ENCODE measurements at regions of chr6 and their contacts with region 1.

Region 1: DNA sequence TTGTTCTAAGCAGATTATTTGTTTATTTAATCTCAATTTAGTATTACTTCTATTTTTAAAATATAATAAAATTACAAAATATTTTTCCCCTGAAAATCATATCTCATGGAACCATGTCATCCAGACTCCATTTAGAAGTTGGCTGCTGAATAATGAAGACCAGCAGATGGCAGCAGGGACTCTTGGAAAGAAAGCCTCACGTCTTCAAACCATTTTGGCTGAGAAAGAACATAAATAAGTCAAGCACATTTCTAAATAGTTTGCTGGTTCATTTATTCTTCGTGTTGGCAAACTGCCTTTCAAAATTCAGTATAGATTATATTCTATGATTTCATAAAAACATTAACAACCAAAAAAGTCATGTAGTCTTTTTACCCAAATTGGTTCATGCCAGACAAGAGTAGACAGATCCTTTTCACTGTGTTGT is 71.7 kb downstream of the RCAN2 start:
- DNase-seq: no peak
- ATAC-seq: no peak

Region 2: GRCh38 chr6:45930420-45931040 is 489.1 kb before region 1 on chr6:
- intact Hi-C with region 1: loop called (anchors 10 kb)
- DNase-seq: peak; percentile 80
- ATAC-seq: peak; percentile 71

Region 3: GRCh38 chr6:46491628-46492547 is 72.3 kb after region 1 on chr6:
- intact Hi-C with region 1: loop called (anchors 1 kb)
- DNase-seq: peak; percentile 76
- ATAC-seq: peak; percentile 91

Region 4: GRCh38 chr6:46612645-46613044 is 193.1 kb after region 1 on chr6:
- intact Hi-C with region 1: loop called (anchors 5 kb)
- DNase-seq: no peak
- ATAC-seq: peak; percentile 57

Region 5: DNA sequence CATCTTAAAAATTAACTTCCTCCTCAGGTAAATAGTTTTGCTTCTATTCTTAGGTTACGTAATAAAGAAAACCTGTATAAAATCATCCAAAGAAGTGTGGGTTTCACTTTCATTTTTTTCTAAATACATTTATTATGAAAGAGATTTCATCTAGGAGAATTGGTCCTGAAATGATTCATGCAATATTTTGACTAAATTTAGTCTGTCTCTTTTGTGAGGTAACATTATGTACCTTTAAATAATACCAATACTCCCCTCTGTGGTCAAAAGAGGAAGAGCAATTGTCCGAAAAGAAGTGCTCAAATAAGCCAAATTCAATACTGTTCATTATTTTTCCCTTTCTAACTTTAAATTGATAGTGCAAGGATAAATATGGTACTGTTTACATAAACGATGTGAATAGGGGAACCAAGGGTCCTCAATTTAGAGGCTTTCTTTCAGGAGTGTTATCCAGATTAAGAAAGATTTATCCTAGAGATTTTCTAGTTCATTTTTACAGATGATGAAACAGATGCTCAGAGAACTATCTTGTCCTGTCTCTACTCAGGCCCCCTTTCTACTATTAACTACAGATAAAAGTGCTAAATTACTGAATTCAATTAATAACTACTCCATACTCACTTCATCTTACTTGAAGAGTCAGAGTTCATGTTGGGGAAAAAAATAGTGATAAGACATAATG is 206.8 kb after region 1 on chr6:
- intact Hi-C with region 1: loop called (anchors 1 kb)
- DNase-seq: no peak
- ATAC-seq: no peak

Region 6: GRCh38 chr6:46772762-46773161 is 353.2 kb after region 1 on chr6:
- intact Hi-C with region 1: loop called (anchors 10 kb)
- DNase-seq: no peak
- ATAC-seq: peak; percentile 65

Region 7: GRCh38 chr6:47047479-47048407 is 628.2 kb after region 1 on chr6:
- intact Hi-C with region 1: loop called (anchors 5 kb)
- DNase-seq: no peak
- ATAC-seq: peak; percentile 83

Measured in Right ventricle myocardium inferior (tissue), 1 donor.